HEK293 (cell line): ENCODE measurements at regions of chr2 and their contacts with region 1.

Region 1: GRCh38 chr2:119234377-119235019 is 10.9 kb downstream of the STEAP3 start:
- H3K4me3 ChIP-seq: no peak overlapping the region
- H3K27ac ChIP-seq: no peak overlapping the region
- H3K4me1 ChIP-seq: no peaks in the 10 kb centered on the region
- CTCF ChIP-seq: peak; percentile 45; the same call in 1 of the 2 replicates

Region 2: DNA sequence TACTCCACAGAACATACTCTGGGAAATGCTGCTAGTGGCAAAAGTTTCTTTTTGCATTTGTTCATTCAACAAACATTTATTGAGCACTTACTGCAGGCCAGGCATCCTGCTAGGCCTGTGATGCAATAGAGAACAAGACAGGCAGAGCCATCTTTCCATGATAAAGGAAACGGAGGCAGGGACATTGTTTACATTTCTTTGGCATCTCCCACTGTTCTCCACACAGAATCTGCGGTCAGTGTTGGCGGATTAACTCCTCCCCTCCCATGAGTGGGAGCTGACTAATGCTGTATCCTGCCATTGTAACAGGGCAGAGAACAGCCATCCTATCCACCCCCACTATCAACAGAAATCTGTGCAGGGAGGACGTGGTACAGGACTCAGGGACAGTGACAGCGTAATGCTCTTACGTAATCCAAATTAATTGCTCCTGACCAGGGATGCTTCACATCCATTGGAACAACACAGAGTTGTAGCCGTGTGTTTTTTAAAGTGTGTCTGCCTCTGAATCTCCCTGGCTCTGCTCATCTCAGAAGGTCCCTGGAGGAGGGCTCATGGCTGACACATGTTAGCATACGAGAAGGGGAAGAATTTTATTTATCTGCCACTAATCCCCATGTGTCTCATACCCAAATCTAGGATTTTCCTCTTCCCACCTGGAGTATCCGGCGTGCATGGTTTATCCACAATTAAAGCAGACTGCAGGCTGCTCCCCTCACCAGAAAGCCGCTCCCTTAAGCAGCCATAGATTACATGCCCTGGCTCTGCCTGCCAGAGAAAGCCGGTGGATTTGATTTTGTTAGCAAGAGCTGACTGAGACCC is 21.5 kb after region 1 on chr2:
- CTCF ChIA-PET with region 1: interaction called, 10 read pairs
- POLR2A ChIA-PET with region 1: no interaction called
- H3K4me3 ChIP-seq: no peak overlapping the region
- H3K27ac ChIP-seq: no peak overlapping the region
- H3K4me1 ChIP-seq: peaks cover 14% of the 10 kb centered on the region
- CTCF ChIP-seq: no peak

Region 3: DNA sequence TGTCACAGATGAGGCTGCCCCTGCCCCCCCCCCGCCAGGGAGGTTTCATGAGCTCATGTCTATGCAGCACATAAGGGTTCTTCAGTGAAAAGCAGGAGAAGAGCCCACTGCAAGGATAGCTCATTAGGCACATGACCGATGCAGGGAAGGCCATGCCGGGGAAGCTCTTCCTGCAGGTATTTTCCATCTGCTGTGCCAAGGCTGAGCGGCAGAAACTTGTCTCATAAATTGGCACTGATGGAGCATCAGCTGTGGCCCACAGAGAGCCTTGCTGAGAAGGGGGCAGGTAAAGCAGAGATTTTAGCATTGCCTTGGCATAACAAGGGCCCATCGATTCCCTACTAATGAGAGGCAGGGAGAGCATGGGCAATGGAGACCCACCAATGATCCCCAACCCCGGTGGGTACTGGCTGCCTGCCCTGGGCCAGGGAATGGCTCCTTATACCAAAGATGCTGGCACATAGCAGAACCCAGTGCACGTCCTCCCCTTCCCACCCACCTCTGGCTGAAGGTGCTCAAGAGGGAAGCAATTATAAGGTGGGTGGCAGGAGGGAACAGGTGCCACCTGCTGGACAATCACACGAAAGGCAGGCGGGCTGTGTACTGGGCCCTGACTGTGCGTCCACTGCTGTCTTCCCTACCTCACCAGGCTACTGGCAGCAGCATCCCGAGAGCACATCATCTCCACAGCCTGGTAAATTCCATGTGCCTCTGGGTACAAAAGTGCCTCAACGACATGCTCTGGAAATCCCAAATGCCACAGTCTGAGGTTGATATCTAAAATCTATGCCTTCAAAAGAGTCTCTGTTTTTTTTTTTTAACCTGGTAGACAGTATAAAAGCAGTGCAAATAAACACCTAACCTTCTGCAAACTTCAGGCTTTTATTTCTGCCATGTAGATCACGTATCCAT is 30.5 kb after region 1 on chr2:
- CTCF ChIA-PET with region 1: interaction called, 15 read pairs
- POLR2A ChIA-PET with region 1: no interaction called
- H3K4me3 ChIP-seq: no peak overlapping the region
- H3K27ac ChIP-seq: no peak overlapping the region
- H3K4me1 ChIP-seq: no peaks in the 10 kb centered on the region
- CTCF ChIP-seq: peak; percentile 78

Region 4: DNA sequence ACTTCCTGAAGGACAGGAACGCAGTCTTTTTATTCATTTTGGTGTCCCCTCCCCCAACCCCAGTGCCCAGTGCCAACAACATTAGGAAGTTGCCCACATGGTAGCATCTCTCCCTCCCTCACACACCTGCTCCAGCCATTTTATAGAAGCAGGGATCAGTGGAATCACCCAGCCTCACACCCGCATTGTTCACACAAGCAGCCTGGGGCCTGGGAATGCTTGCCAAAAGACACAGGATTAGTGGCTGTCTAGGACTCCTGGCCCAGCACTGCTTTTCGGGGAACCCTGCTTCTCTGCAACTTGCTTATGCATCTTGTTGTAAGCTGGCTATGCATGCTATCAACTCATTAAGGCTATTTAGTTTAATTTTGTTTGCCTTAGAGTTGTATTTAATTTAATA is 215.0 kb after region 1 on chr2:
- CTCF ChIA-PET with region 1: no interaction called
- POLR2A ChIA-PET with region 1: no interaction called
- H3K4me3 ChIP-seq: no peak overlapping the region
- H3K27ac ChIP-seq: no peak overlapping the region
- H3K4me1 ChIP-seq: no peaks in the 10 kb centered on the region
- CTCF ChIP-seq: no peak